BJ (cell line): ENCODE measurements at regions of chr16 and their contacts with region 1.

Region 1: GRCh38 chr16:96935-97381 is 18.9 kb downstream of the MPG start:
- DNase-seq: no peak
- H3K4me3 ChIP-seq: no peak overlapping the region
- H3K27me3 ChIP-seq: no peaks in the 10 kb centered on the region
- CTCF ChIP-seq: peak; percentile 99

Region 2: DNA sequence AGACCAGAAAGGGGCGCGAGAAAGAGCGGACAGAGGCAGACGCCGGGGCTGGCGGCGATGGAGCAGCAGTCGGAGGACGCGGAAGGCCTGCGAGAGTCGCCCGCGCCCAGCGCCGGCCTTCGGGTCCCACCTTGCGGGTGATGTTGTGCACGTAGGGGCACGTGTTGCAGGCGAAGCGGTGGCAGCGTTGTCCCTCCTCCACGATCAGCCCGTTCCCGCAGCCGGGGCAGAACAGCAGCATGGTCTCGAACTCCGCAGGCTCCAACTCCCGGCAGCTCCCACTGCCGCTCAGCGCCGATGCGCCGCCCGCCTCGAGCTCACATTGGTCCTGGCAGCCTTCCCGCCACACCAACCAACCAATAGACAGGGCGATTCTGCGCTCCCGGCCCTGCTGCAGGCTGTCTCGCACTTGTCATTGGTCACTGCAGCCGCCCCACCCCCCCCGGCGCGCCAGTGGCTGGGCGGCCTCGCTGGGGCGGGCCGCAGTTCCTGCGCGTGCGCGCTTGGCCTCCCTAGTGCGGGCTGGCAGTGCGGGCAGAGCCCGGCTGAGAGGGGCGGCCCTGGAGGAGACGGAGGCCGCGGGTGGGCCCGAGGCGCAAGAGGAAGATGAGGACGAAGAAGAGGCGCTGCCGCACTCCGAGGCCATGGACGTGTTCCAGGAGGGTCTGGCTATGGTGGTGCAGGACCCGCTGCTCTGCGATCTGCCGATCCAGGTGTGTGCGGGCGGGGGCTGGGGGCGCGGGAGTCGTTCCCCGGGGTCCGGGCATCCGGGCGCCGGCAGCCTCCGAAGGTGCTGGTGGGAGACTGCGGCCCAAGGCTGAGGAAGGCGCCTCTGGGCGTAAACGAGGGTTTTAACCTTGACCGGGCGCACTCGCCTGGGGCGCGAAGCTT is 43.4 kb before region 1 on chr16 and contains the starts of genes POLR3K and SNRNP25:
- CTCF ChIA-PET with region 1: interaction called, 23 read pairs
- POLR2A ChIA-PET with region 1: interaction called, 3 read pairs
- DNase-seq: peak; percentile 84
- H3K4me3 ChIP-seq: peak within 1 kb of the TSS; percentile 68
- H3K27me3 ChIP-seq: no peaks in the 10 kb centered on the region
- CTCF ChIP-seq: no peak
- polyA plus RNA-seq, gene POLR3K: 14.3 and 14.6 TPM in 2 replicates
- polyA plus RNA-seq, gene SNRNP25: 23.6 and 34.6 TPM in 2 replicates

Region 3: DNA sequence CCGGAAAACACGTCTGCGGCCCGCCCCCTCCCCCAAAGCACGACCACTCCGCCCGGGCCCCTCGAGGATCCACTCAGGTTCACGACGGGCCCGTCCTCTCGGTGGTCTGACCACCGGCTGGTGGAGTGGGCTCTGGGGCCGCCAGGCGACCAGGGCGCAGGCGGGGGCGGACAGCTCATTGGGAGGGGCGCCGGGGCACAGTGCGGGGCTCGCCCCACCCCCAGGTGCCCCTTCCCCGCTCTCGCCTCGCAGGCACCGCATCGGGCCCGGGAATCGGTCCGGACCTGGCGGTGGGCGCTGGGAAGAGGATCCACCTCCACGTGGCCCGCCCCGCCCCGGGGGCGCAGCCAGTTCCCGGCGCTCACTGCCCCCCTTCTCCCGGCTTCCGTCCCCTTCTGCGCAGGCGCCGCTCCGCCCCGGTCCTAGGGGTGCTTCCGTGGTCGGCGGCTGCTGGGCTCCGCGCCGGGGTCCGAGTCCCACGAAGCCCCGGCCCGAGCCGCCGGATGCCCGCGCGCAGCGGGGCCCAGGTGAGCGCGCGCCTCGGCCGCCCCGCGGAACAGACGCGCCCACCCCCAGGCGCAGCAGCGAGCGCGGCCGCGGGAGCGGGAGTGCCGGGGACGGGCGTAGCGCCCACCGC is 19.0 kb before region 1 on chr16 and contains the start of gene MPG:
- CTCF ChIA-PET with region 1: interaction called, 544 read pairs
- POLR2A ChIA-PET with region 1: no interaction called
- DNase-seq: no peak
- H3K4me3 ChIP-seq: peak within 1 kb of the TSS; percentile 74
- H3K27me3 ChIP-seq: no peaks in the 10 kb centered on the region
- CTCF ChIP-seq: no peak
- polyA plus RNA-seq, gene MPG: 73.3 and 117 TPM in 2 replicates

Region 4: DNA sequence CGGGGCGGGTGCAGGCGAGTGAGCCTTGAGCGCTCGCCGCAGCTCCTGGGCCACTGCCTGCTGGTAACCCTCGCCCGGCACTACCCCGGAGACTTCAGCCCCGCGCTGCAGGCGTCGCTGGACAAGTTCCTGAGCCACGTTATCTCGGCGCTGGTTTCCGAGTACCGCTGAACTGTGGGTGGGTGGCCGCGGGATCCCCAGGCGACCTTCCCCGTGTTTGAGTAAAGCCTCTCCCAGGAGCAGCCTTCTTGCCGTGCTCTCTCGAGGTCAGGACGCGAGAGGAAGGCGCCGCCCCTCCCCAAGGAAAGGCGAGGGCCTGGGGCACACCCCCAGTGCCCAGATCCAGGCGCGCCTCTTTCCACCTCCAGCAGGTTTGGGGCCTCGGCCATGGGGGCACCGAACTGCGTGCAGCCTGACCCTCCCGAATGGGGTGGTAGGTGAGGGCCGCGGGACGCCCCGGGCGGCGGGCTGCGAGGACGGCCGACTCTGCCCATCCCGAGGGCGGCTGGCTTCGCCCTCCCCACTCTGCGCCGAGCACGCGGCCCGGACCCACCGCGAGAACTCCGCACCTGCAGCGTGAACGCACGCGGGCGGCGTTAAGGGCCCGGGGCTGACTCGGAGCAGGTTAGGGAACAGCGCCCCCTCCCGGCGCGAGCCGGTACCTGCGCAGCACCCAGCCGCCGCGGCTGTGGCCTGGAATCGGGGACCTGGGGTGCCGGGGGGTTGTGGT is 84.1 kb after region 1 on chr16:
- CTCF ChIA-PET with region 1: interaction called, 16 read pairs
- POLR2A ChIA-PET with region 1: no interaction called
- DNase-seq: no peak
- H3K4me3 ChIP-seq: peak overlapping the region; percentile 29; the same call in 1 of the 2 replicates
- H3K27me3 ChIP-seq: peaks cover 10% of the 10 kb centered on the region
- CTCF ChIP-seq: peak; percentile 89

Region 5: DNA sequence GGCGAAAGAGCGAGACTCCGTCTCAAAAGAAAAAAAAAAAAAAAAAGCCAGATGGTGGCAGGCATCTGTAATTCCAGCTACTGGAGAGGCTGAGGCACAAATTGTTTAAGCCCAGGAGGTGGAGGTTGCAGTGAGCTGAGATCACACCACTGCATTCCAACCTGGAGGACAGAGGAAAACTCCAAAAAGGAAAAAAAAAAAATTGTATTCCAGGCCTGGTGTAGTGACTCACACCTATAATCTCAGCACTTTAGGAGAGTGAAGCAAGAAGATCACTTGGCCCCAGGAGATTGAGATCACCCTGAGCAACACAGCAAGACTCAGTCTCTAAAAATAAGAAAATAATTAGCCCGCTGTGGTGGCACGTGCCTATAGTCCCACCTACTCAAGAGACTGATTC is 103.4 kb after region 1 on chr16:
- CTCF ChIA-PET with region 1: no interaction called
- POLR2A ChIA-PET with region 1: no interaction called
- DNase-seq: peak; percentile 52
- H3K4me3 ChIP-seq: no peak overlapping the region
- H3K27me3 ChIP-seq: no peaks in the 10 kb centered on the region
- CTCF ChIP-seq: no peak

Region 6: GRCh38 chr16:351804-352520 is 255.0 kb after region 1 on chr16:
- CTCF ChIA-PET with region 1: no interaction called
- POLR2A ChIA-PET with region 1: no interaction called
- DNase-seq: no peak
- H3K4me3 ChIP-seq: peak overlapping the region; percentile 68
- H3K27me3 ChIP-seq: no peaks in the 10 kb centered on the region
- CTCF ChIP-seq: no peak

Region 7: GRCh38 chr16:361872-362701 is 265.1 kb after region 1 on chr16:
- CTCF ChIA-PET with region 1: interaction called, 13 read pairs
- POLR2A ChIA-PET with region 1: no interaction called
- DNase-seq: no peak
- H3K4me3 ChIP-seq: no peak overlapping the region
- H3K27me3 ChIP-seq: no peaks in the 10 kb centered on the region
- CTCF ChIP-seq: peak; percentile 90